ENCODE measurements at regions of chr7 and their contacts with region 1.

Region 1: DNA sequence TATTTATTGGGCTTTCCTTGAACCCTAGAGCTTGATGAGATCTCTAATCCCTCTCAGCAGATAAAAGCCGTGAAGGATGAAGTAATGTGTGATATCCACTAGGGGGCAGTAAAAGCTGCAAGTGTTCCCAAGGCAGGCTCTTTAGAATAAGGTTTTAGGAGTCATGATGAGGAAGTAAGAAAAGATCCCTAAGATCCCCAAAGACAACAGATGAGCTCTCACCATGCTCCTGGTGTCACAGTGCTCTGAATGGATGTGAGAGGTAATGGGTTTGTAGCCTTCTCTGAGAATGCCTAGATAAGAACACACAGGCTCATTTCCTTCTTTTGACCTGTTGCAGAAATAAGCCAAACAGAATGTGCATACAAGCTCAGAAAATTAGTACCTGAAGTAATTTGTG is 70.4 kb upstream of the ITPRID1 start:
- DNase-seq: peak; percentile 45
- ATAC-seq: peak; percentile 81
- H3K4me3 ChIP-seq: no peak overlapping the region
- H3K27ac ChIP-seq: no peak overlapping the region
- H3K4me1 ChIP-seq: no peaks in the 10 kb centered on the region
- H3K27me3 ChIP-seq: no peaks in the 10 kb centered on the region
- CTCF ChIP-seq: peak; percentile 67
- POLR2A ChIP-seq: no peak
- RAD21 ChIP-seq: peak; percentile 58

Region 2: GRCh38 chr7:31432836-31433340 is 10.6 kb before region 1 on chr7:
- CTCF ChIA-PET with region 1: interaction called, 10 read pairs
- POLR2A ChIA-PET with region 1: no interaction called
- dilution Hi-C with region 1: no loop called
- in situ Hi-C with region 1: no loop called
- intact Hi-C with region 1: no loop called
- DNase-seq: no peak
- ATAC-seq: no peak
- H3K4me3 ChIP-seq: no peak overlapping the region
- H3K27ac ChIP-seq: no peak overlapping the region
- H3K4me1 ChIP-seq: no peaks in the 10 kb centered on the region
- H3K27me3 ChIP-seq: no peaks in the 10 kb centered on the region
- CTCF ChIP-seq: no peak
- POLR2A ChIP-seq: no peak
- RAD21 ChIP-seq: no peak

Region 3: DNA sequence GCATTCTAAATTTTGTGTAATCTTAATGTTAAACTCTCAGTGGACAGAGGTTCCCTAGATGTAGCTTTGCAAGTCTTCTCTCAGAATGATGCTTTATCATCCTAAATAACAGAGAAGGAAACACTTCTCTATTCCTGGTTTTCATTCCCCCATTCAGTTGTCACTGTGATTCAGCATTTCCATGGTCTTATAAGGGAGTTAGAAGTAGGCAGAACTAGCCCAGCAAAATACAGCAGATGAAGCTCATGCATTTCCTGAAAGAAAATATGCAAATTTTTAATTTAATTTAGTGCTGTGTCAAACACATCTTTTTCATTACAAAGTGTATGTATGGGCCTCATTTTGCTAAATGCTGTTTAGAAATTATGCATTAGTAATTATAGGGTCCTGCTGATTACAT is 140.5 kb after region 1 on chr7:
- CTCF ChIA-PET with region 1: no interaction called
- POLR2A ChIA-PET with region 1: no interaction called
- dilution Hi-C with region 1: no loop called
- in situ Hi-C with region 1: no loop called
- intact Hi-C with region 1: no loop called
- DNase-seq: no peak
- ATAC-seq: no peak
- H3K4me3 ChIP-seq: no peak overlapping the region
- H3K27ac ChIP-seq: no peak overlapping the region
- H3K4me1 ChIP-seq: no peaks in the 10 kb centered on the region
- H3K27me3 ChIP-seq: no peaks in the 10 kb centered on the region
- CTCF ChIP-seq: no peak
- POLR2A ChIP-seq: no peak
- RAD21 ChIP-seq: no peak

Region 4: DNA sequence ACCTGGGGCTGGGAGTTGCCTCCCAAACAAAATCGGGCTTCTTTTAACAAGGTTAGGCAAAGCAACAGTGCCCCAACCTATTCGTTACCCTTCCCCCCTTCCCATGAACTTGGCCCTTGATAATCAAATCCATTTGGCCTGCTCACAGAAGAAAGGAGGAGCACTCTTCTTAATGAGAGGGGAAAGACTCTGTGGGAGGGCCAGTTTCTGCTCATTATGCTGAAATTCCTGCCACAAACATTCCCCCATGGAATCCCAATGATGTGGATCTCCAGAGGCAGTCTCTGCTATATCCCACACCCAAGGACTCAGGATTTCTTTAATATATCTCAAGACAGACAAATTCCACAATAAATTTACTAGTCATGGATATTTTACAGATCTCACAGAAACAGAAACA is 1003.8 kb after region 1 on chr7:
- CTCF ChIA-PET with region 1: no interaction called
- POLR2A ChIA-PET with region 1: no interaction called
- dilution Hi-C with region 1: no loop called
- in situ Hi-C with region 1: no loop called
- intact Hi-C with region 1: loop called (anchors 10 kb)
- DNase-seq: no peak
- ATAC-seq: no peak
- H3K4me3 ChIP-seq: no peak overlapping the region
- H3K27ac ChIP-seq: no peak overlapping the region
- H3K4me1 ChIP-seq: no peaks in the 10 kb centered on the region
- H3K27me3 ChIP-seq: no peaks in the 10 kb centered on the region
- CTCF ChIP-seq: no peak
- POLR2A ChIP-seq: no peak
- RAD21 ChIP-seq: no peak

Measured in IMR-90 (cell line).